ENCODE measurements at regions of chr6 and their contacts with region 1.

Region 1: DNA sequence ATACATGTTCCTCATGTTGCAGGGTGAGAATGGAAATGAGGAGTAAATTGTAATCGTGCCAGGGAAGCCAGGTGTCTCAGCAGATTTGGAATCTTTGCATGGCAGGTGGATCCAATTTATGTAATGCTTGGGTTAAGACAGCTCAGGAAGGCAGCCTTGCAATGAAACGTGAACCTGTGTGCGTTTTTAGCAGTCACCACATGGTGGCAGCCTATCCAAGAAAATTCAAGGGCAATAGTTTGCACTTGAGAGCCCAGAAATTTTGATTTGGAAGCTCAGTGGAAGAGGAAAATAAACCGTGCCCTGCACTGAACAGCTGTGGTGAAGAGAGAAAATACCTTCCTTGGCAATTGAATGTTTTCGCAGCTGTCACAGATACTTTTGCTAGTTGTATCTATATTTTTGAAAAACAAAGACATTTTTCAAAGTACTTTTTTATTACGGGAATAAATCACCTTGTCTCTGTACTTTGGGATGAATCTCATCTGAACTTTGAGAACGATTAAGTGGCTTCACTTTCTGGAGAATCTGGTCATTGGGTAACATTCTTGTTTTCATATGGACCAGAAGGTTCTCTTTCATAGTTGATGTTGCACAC is 26.5 kb downstream of the MTHFD1L start:
- DNase-seq: peak in 3 of 4 donors; percentile 54 to 82 (median 61)
- ATAC-seq: peak; percentile 90
- H3K4me3 ChIP-seq: no peak overlapping the region
- H3K27ac ChIP-seq: no peak overlapping the region
- H3K4me1 ChIP-seq: peaks cover 0 to 6% of the 10 kb centered on the region in 2 donors
- H3K27me3 ChIP-seq: no peaks in the 10 kb centered on the region
- CTCF ChIP-seq: peak; percentile 74 to 76

Region 2: DNA sequence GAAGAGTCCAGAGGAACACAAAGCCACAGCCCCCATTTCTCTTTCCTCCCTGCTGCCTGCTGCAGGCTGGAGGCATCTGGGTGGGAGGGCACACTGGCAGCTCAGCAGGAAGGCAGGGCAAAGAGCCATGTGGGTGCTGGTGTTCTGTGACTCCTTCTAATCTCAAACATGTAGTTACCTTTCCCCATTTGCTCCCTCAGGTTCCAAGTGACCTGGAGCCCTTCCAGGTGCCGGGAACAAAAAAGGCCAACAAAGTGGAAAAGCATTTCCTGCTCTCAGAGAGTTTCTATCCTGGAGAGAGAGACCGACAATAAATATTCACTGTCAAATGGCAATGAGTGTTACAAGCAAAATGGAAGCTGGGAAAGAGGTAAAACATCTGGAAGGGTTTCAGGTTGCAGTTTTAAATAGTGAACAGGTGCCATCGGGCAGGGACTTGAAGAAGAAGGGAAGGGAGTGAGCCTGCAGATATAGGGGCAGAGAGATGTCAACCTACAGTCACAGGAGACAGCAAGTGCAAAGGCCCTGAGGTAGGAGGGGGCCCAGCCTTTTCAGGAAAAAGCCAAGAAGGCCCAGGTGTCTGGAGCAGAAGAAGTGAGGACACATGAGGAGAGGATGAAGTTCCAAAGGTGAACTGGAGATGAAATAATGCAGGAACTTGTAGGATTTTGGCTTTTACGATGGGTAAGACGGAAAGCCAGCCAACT is 566.8 kb before region 1 on chr6:
- intact Hi-C with region 1: no loop called
- DNase-seq: peak in 1 of 4 donors; percentile 46
- ATAC-seq: peak; percentile 55
- H3K4me3 ChIP-seq: no peak overlapping the region
- H3K27ac ChIP-seq: no peak overlapping the region
- H3K4me1 ChIP-seq: peaks cover 0 to 13% of the 10 kb centered on the region in 2 donors
- H3K27me3 ChIP-seq: no peaks in the 10 kb centered on the region
- CTCF ChIP-seq: no peak

Region 3: DNA sequence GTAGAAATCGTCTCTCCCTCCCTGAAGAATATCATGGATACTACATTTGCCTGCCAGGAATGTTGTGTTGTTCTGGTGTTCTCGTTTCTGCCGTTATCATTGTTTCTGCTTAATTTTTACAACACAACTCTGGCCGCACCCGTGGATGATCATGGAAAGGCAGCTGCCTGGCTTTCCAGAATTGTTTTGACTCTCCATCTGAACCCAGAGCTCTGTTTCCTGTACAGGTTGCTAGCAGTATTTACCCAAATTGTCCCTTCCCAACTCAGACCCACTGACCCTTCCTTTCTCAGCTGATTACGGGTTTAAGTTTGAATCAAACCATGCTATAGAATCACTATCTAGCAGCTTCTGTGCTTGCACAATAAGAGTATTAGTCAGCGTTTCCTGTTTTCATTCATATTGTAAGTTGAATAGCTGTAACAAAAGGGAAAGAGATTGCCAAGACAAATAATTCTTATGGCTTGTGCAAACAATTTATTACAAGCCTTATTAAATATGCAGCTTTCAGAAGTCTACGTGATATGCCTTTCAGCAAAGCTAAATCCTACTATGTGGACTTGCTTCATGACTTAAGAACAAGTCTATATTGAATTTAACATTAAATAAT is 112.5 kb after region 1 on chr6:
- intact Hi-C with region 1: loop called in 1 of 2 experiments (anchors 10 kb)
- DNase-seq: peak in 2 of 4 donors; percentile 72 to 82
- ATAC-seq: peak; percentile 79
- H3K4me3 ChIP-seq: no peak overlapping the region
- H3K27ac ChIP-seq: peak overlapping the region; percentile 80
- H3K4me1 ChIP-seq: peaks cover 8 to 32% of the 10 kb centered on the region in 2 donors
- H3K27me3 ChIP-seq: no peaks in the 10 kb centered on the region
- CTCF ChIP-seq: no peak

Region 4: GRCh38 chr6:151330134-151330696 is 438.2 kb after region 1 on chr6:
- intact Hi-C with region 1: loop called in 1 of 2 experiments (anchors 5 kb)
- DNase-seq: peak in 1 of 4 donors; percentile 67
- ATAC-seq: no peak
- H3K4me3 ChIP-seq: no peak overlapping the region
- H3K27ac ChIP-seq: no peak overlapping the region
- H3K4me1 ChIP-seq: peaks cover 1 to 10% of the 10 kb centered on the region in 2 donors
- H3K27me3 ChIP-seq: peaks cover 0 to 16% of the 10 kb centered on the region in 2 donors
- CTCF ChIP-seq: no peak